Panc1 (cell line): ENCODE measurements at regions of chr17 and their contacts with region 1.

Region 1: DNA sequence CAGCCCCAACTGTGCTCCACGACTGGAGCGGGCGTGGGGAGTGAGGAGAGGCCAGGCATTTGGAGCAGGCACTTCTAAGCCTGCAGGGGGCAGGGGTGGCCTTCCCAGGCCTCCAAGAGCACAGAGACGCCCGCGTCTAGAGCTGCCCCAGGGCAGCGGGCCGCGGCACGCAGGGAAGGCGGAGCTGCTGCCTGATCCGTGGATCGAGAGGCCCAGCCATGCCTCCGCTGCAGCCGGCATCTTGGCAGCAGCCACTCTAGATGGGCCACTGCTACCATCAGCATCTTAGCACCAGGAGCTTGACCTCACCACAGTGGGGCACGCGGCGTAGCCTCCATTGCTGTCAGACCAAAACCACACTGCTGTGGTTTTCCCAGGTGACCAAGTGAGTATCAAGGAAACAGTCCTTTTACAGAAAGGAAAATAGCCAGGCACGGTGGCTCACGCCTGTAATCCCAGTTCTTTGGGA is 20.4 kb upstream of the WDR45B start:
- DNase-seq: no peak
- ATAC-seq: peak; percentile 97
- H3K4me3 ChIP-seq: peak overlapping the region in 1 of 2 experiments; percentile 21; a peak in 2 of 4 replicates
- H3K27ac ChIP-seq: peak overlapping the region; percentile 20; the same call in 1 of the 2 replicates
- H3K4me1 ChIP-seq: no peaks in the 10 kb centered on the region
- H3K27me3 ChIP-seq: no peaks in the 10 kb centered on the region
- CTCF ChIP-seq: peak; percentile 90

Region 2: GRCh38 chr17:82775001-82775823 is 106.5 kb after region 1 on chr17:
- CTCF ChIA-PET with region 1: interaction called, 4 read pairs
- POLR2A ChIA-PET with region 1: interaction called, 18 read pairs
- in situ Hi-C with region 1: no loop called
- intact Hi-C with region 1: loop called (anchors 5 kb)
- DNase-seq: no peak
- ATAC-seq: peak; percentile 85
- H3K4me3 ChIP-seq: no peak overlapping the region
- H3K27ac ChIP-seq: no peak overlapping the region
- H3K4me1 ChIP-seq: no peaks in the 10 kb centered on the region
- H3K27me3 ChIP-seq: no peaks in the 10 kb centered on the region
- CTCF ChIP-seq: peak; percentile 99

Region 3: DNA sequence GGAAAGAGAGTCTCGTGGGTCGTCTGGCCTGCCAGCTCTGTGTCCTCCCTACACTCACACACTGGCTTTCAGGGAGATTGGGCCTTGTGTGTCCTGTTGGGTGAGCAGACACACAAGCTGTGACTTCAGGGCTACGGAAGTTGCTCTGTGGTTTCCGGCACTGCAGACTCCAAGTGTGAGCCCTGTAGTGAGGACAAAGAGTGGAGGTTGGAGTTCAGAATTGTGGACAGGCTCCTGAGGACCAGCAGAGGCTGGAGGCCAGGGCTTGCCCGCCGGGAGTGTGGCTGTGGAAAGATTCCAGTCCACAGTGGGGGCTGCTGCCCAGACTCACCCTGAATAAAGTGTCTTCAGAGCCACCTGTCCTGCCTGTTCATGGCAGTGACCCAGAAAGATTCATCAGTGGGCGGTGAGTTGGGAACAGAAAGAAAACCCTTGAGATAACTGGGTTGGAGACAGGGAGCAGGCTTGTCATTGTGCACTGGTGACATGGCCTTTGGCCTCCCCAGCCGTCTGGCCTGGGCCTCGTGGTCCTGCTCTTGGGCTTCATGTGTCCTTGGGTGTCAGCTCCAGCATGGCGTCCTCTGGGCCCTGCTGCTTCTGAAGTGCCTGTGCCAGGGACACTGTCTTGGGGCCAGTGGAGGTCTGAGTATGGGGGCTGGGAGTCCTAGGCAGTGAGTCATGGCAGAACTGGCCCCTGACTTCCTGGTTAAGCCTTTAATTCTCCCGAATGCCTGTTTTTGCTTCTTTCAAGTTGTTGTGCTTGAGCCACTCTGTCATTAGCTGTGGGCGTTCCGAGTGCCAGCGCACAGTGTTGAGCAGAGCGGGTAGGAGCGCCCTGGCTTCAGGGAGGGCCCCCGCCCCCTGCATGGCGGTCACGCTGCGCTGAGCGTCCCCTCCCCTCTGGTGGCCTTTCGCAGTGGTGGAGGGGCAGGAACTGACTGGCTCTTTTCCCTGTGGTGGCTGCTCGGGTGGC is 191.1 kb after region 1 on chr17:
- CTCF ChIA-PET with region 1: no interaction called
- POLR2A ChIA-PET with region 1: interaction called, 22 read pairs
- in situ Hi-C with region 1: no loop called
- intact Hi-C with region 1: no loop called
- DNase-seq: no peak
- ATAC-seq: peak; percentile 19; the same call in 1 of the 2 replicates
- H3K4me3 ChIP-seq: no peak overlapping the region
- H3K27ac ChIP-seq: peak overlapping the region; percentile 25; the same call in 1 of the 2 replicates
- H3K4me1 ChIP-seq: peaks cover 17% of the 10 kb centered on the region
- H3K27me3 ChIP-seq: no peaks in the 10 kb centered on the region
- CTCF ChIP-seq: no peak